Activated naive CD4-positive, alpha-beta T cell treated with anti-CD3 and anti-CD28 coated beads, Interleukin-2, amount 10 ng/mL, durations not matched to agents 7 days and 5 days (primary cell): ENCODE measurements at regions of chr19 and their contacts with region 1.

Region 1: GRCh38 chr19:48738557-48739399 is 1.6 kb downstream of the RASIP1 start:
- DNase-seq: peak; percentile 94
- H3K4me3 Mint-ChIP-seq: peak overlapping the region; percentile 41
- H3K27ac Mint-ChIP-seq: no peak overlapping the region
- H3K4me1 Mint-ChIP-seq: peaks cover 31% of the 10 kb centered on the region
- H3K27me3 Mint-ChIP-seq: peaks cover 41% of the 10 kb centered on the region

Region 2: GRCh38 chr19:48588670-48589399 is 149.9 kb before region 1 on chr19:
- CTCF ChIA-PET with region 1: no interaction called
- DNase-seq: peak; percentile 92
- H3K4me3 Mint-ChIP-seq: peak overlapping the region; percentile 82
- H3K27ac Mint-ChIP-seq: peak overlapping the region; percentile 89
- H3K4me1 Mint-ChIP-seq: peaks cover 29% of the 10 kb centered on the region
- H3K27me3 Mint-ChIP-seq: peaks cover 43% of the 10 kb centered on the region

Region 3: GRCh38 chr19:48646001-48646721 is 92.6 kb before region 1 on chr19 and contains the start of gene CA11:
- CTCF ChIA-PET with region 1: interaction called, 13 read pairs
- DNase-seq: peak; percentile 95
- H3K4me3 Mint-ChIP-seq: peak within 1 kb of the TSS; percentile 75
- H3K27ac Mint-ChIP-seq: peak within 1 kb of the TSS; percentile 81
- H3K4me1 Mint-ChIP-seq: peaks cover 55% of the 10 kb centered on the region
- H3K27me3 Mint-ChIP-seq: peaks cover 16% of the 10 kb centered on the region

Region 4: DNA sequence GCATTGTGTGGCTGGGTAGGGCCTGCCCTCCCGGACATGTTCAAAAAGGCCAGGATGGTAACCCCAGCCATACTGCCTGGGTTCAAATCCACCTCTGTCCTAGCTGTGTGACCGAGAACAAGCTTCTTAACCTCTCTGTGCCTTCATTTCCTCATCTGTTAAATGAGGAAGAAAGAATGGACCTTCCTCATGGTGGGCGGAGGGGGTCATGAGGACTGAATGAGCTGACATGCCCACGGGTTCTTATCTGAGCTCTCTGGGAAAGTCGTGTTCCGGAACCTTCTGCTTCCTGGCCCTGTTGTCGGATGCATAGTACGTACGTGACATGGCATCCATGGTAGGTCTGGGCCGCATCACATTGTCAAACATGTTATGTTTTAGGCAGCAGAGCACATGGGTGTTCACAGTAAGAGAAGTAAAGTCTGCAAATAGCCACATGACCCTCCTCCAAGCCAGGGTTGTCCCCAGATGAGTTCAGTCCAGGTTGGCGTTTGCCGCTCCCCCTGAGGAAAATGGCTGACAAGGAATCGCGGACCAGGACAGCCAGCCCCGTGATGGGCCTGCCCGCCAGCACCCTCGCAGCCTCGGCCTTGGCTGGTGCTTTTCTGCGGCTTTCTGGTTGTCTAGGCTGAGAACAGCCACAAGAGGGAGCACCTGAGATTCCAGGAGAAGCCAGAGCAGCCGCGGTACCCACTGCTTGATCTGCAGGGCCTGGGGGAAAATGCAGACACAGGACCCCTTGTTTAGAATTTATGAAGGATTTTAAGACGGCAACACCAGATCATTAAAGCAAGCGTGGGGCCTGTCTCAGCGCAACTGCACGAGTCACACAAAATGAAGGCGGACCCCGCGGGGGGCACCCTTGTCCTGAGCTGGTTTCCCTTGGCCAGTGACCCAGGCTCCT is 63.6 kb before region 1 on chr19:
- CTCF ChIA-PET with region 1: interaction called, 13 read pairs
- DNase-seq: peak; percentile 86
- H3K4me3 Mint-ChIP-seq: no peak overlapping the region
- H3K27ac Mint-ChIP-seq: no peak overlapping the region
- H3K4me1 Mint-ChIP-seq: peaks cover 6% of the 10 kb centered on the region
- H3K27me3 Mint-ChIP-seq: peaks cover 27% of the 10 kb centered on the region

Region 5: GRCh38 chr19:48757741-48758144 is 19.0 kb after region 1 on chr19:
- CTCF ChIA-PET with region 1: no interaction called
- DNase-seq: no peak
- H3K4me3 Mint-ChIP-seq: no peak overlapping the region
- H3K27ac Mint-ChIP-seq: no peak overlapping the region
- H3K4me1 Mint-ChIP-seq: peaks cover 23% of the 10 kb centered on the region
- H3K27me3 Mint-ChIP-seq: peaks cover 68% of the 10 kb centered on the region